Activated CD4-positive, alpha-beta T cell treated with anti-CD3 and anti-CD28 coated beads, Interleukin-2, amount 10 ng/mL, durations not matched to agents 24 days and 14 days (primary cell): ENCODE measurements at regions of chr6 and their contacts with region 1.

Region 1: GRCh38 chr6:44127186-44128019 is at the starts of genes MRPL14 and TMEM63B:
- DNase-seq: peak; percentile 97
- H3K4me3 Mint-ChIP-seq: peak within 1 kb of the TSS; percentile 86
- H3K27ac Mint-ChIP-seq: peak within 1 kb of the TSS; percentile 99
- H3K4me1 Mint-ChIP-seq: peaks cover 51% of the 10 kb centered on the region
- H3K27me3 Mint-ChIP-seq: no peaks in the 10 kb centered on the region
- total RNA-seq, gene MRPL14: 65.6 and 67.5 TPM in 2 replicates
- total RNA-seq, gene TMEM63B: 17.8 and 19.7 TPM in 2 replicates

Region 2: DNA sequence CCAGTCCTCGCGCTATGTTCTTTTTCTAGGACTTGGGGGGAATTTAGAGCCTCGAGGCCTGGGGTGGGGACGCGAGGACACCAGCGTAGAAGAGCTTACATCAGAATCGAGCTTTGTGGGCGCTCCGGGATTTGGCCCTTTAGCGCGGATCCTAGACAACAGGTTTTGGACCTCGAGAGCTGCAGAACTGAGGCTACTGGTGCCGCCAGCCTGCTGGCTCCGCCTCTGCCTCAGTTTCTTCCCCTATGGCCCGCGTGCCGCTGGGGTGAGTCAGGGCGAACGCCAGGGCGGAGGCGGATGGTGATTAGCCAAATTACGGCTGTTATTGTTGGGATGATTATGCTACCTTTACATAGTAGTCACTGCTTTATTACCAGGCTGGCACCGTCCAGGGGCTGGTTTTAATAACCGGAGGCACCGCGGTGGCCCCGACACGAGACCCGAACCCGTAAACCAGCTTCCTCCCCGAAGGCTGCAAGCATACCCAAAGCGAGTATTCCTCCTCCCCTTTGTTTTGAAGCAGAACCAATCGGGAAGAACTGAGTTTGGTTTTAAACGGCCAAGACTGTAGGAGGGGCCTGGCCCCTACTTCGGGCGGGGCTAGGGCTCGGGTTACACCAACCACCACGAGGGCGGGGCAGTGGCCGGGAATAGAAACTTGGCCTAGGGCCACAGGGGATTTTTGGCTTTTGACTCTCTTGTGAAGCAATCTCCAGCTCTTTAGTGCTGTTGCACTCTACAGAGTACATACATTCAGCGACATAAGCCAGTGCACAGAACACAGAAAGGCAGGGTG is 497.7 kb before region 1 on chr6:
- intact Hi-C with region 1: loop called (anchors 2 kb)
- DNase-seq: peak; percentile 98
- H3K4me3 Mint-ChIP-seq: peak overlapping the region; percentile 99
- H3K27ac Mint-ChIP-seq: peak overlapping the region; percentile 99
- H3K4me1 Mint-ChIP-seq: peaks cover 38% of the 10 kb centered on the region
- H3K27me3 Mint-ChIP-seq: no peaks in the 10 kb centered on the region

Region 3: DNA sequence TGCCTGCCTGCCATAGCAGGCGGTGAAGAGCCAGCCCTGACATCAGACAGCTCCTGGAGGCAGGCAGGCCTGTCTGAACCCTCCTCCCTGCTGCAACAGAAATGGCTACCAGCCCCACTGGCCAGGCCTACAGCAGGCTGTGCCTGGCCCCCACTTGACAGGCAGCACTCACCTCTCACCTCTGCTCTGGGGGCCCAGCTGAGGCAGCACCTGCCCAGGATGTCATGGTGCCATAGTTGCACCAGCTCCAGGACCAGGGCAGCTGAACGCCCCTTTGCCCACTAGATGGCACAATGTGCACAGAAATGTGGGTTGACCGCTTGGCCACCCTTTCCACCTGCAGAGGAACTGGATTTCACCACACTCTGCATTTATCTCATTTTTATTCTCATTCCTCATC is 30.8 kb before region 1 on chr6:
- intact Hi-C with region 1: loop called (anchors 2 kb)
- DNase-seq: peak; percentile 92
- H3K4me3 Mint-ChIP-seq: no peak overlapping the region
- H3K27ac Mint-ChIP-seq: no peak overlapping the region
- H3K4me1 Mint-ChIP-seq: peaks cover 5% of the 10 kb centered on the region
- H3K27me3 Mint-ChIP-seq: no peaks in the 10 kb centered on the region

Region 4: DNA sequence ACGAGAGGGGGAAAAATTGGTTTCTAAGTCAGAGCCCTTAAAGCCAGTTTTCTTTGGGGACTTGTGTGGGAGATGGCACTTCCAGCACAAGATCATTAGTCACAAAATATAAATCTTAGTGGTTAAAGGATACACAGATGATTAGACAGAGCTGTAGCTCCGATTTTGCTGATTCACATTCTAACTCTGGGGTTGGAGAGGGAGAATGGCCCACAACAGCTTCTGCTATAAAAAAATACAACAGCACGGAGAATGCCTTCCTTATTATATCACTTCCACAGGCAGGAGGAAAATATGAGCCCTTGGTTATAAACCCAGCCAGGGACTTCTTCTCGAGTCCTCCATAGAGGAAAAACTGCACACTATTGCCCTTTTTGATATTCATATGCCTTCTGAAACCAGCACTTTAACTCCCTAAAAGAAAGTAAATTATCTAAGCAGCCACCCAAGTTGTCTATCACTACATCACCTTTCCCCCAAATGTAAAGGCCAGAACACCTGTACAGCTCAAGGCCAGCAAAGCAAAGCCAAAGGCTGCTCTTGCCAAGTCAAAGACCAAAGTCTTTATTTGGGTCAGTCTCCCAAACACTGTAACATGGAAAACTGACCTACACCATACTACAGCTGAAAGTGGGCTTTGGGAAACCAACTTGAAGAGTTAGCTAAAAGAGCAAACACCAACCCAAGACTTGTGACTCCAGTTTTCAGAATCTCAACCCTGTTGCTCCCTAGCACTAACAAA is 10.6 kb before region 1 on chr6:
- intact Hi-C with region 1: no loop called
- DNase-seq: no peak
- H3K4me3 Mint-ChIP-seq: no peak overlapping the region
- H3K27ac Mint-ChIP-seq: peak overlapping the region; percentile 64
- H3K4me1 Mint-ChIP-seq: peaks cover 43% of the 10 kb centered on the region
- H3K27me3 Mint-ChIP-seq: no peaks in the 10 kb centered on the region

Region 5: GRCh38 chr6:44221291-44221960 is 94.0 kb after region 1 on chr6:
- intact Hi-C with region 1: loop called (anchors 2 kb)
- DNase-seq: peak; percentile 93
- H3K4me3 Mint-ChIP-seq: no peak overlapping the region
- H3K27ac Mint-ChIP-seq: peak overlapping the region; percentile 42
- H3K4me1 Mint-ChIP-seq: peaks cover 40% of the 10 kb centered on the region
- H3K27me3 Mint-ChIP-seq: peaks cover 18% of the 10 kb centered on the region

Region 6: DNA sequence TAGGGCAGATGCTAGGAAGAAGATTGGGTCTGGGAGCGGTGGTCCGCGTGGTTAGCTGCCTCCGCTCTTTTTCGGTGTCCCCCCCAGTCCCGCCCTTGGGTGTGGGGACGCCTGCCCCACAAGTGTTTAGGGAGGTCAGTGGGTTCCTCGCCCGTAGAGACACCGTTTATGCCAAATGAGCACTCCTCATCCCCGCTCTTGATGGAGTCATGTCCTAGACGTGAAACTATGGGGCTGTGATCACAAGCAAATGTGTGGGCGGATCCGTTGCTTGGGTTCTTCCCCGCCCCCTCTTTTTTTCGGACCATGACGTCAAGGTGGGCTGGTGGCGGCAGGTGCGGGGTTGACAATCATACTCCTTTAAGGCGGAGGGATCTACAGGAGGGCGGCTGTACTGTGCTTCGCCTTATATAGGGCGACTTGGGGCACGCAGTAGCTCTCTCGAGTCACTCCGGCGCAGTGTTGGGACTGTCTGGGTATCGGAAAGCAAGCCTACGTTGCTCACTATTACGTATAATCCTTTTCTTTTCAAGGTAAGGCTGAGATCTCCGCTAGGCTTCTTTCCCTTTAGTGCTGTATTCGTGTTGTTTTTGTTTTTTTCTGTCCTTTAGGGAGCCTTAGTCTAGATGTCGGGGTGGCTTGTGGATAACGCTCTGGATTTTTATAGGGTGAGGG is 119.4 kb after region 1 on chr6 and contains the start of gene HSP90AB1:
- intact Hi-C with region 1: loop called (anchors 2 kb)
- DNase-seq: peak; percentile 99
- H3K4me3 Mint-ChIP-seq: peak within 1 kb of the TSS; percentile 92
- H3K27ac Mint-ChIP-seq: peak within 1 kb of the TSS; percentile 98
- H3K4me1 Mint-ChIP-seq: peaks cover 40% of the 10 kb centered on the region
- H3K27me3 Mint-ChIP-seq: peaks cover 3% of the 10 kb centered on the region
- total RNA-seq, gene HSP90AB1: 2,450 and 2,479 TPM in 2 replicates